MCF 10A (cell line): ENCODE measurements at regions of chr3 and their contacts with region 1.

Region 1: GRCh38 chr3:137121704-137122314 is 164.0 kb downstream of the IL20RB start:
- DNase-seq: peak; percentile 58
- H3K4me3 Mint-ChIP-seq: no peak overlapping the region
- H3K27ac Mint-ChIP-seq: no peak overlapping the region
- H3K4me1 Mint-ChIP-seq: no peaks in the 10 kb centered on the region
- H3K27me3 Mint-ChIP-seq: no peaks in the 10 kb centered on the region
- CTCF ChIP-seq: peak; percentile 52

Region 2: DNA sequence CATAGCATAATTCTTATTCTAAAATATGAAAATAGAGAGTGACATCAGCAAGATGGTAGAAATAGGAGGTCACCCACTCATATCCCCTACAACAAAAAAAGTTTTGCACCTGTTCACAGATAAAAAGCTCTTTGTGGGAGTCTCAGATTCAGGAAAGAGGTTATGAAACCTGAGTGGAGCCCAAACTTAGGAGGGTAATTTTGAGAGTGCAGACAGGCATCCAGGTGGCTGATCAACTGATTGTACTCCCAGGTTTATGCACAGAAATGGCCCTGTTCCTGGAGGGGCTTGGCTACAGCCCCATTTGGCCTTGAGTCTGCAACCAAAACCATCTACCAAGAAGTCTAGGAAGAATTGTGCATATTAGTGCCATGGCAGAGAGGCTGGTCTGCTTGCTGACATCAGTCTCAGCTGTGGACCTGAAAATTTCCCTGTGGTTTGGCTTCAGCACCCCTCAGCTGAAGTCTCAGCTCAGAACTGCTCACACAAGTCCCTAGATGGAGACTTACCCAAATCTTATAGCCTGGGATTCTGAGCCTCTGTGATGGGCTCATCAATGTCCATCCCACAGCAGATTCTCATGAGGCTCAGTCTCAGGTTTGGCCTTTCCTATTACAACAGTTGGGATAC is 127.6 kb after region 1 on chr3:
- CTCF ChIA-PET with region 1: no interaction called
- POLR2A ChIA-PET with region 1: no interaction called
- intact Hi-C with region 1: no loop called
- DNase-seq: no peak
- H3K4me3 Mint-ChIP-seq: no peak overlapping the region
- H3K27ac Mint-ChIP-seq: no peak overlapping the region
- H3K4me1 Mint-ChIP-seq: no peaks in the 10 kb centered on the region
- H3K27me3 Mint-ChIP-seq: no peaks in the 10 kb centered on the region
- CTCF ChIP-seq: no peak

Region 3: GRCh38 chr3:137692803-137693431 is 571.1 kb after region 1 on chr3:
- CTCF ChIA-PET with region 1: interaction called, 3 read pairs
- POLR2A ChIA-PET with region 1: no interaction called
- intact Hi-C with region 1: loop called (anchors 5 kb)
- DNase-seq: peak; percentile 55
- H3K4me3 Mint-ChIP-seq: no peak overlapping the region
- H3K27ac Mint-ChIP-seq: no peak overlapping the region
- H3K4me1 Mint-ChIP-seq: no peaks in the 10 kb centered on the region
- H3K27me3 Mint-ChIP-seq: peaks cover 36% of the 10 kb centered on the region
- CTCF ChIP-seq: peak; percentile 57